Motor neuron (in vitro differentiated cells): ENCODE measurements at regions of chr1 and their contacts with region 1.

Region 1: DNA sequence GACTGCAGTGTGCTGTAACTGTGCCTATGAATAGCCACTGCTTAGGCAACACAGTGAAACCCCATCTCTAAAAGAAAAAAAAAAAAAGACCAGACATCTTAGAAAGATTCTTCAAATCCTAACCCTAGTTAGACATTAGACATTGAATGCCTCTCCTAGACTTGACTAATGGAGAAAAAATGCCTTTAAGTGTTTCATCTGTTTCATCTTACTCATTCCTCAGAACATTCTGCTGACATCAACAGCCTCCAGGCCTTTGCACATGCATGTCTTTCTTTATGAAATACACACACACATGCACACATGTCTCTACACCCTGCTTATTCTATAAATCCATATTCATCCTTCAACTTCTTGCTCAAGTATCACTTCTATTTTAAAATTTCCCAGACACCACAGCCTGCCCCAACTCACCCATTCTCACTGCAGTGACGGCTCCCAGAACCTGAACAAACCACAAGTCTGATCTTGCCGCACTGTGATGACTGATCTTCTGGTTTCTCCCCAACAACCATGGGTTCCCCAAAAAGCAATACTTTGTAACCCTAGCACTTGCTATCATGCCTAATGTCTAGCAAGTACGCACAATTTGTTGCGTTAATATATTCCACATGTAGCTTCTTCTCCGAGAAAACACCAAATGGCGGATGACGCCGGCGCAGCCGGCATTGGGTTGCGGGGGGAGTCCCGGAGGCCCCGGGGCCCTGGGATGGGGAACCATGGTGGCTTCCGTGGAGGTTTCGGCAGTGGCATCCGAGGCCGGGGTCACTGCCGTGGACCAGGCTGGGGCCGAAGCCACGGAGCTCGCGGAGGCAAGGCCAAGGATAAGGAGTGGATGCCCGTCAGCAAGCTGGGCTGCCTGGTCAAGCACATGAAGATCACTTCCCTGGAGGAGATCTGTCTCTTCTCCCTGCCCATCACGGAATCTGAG is 37.4 kb downstream of the LRRC52 start:
- ATAC-seq: peak in 2 of 8 experiments; percentile 18 to 48
- H3K4me3 ChIP-seq: no peak overlapping the region
- H3K27ac ChIP-seq: no peak overlapping the region
- H3K4me1 ChIP-seq: peaks cover 0 to 2% of the 10 kb centered on the region in 2 donors

Region 2: GRCh38 chr1:165129568-165130164 is 451.5 kb before region 1 on chr1:
- in situ Hi-C with region 1: loop called in 5 of 9 experiments (anchors 10 to 25 kb)
- ATAC-seq: peak; percentile 86 to 98 (median 92)
- H3K4me3 ChIP-seq: no peak overlapping the region
- H3K27ac ChIP-seq: no peak overlapping the region
- H3K4me1 ChIP-seq: peaks cover 12 to 13% of the 10 kb centered on the region in 2 donors

Region 3: GRCh38 chr1:165679282-165680036 is 98.3 kb after region 1 on chr1:
- in situ Hi-C with region 1: no loop called
- ATAC-seq: no peak
- H3K4me3 ChIP-seq: no peak overlapping the region
- H3K27ac ChIP-seq: no peak overlapping the region
- H3K4me1 ChIP-seq: no peaks in the 10 kb centered on the region

Region 4: GRCh38 chr1:165827268-165828102 is 246.3 kb after region 1 on chr1 and contains the start of gene UCK2:
- in situ Hi-C with region 1: no loop called
- ATAC-seq: peak; percentile 80 to 89 (median 85)
- H3K4me3 ChIP-seq: peak within 1 kb of the TSS; percentile 83 to 97 (median 90)
- H3K27ac ChIP-seq: peak within 1 kb of the TSS; percentile 83 to 90
- H3K4me1 ChIP-seq: peaks cover 16 to 23% of the 10 kb centered on the region in 2 donors
- total RNA-seq, gene UCK2: 28.3 to 83.2 (median 46.0) TPM